ENCODE measurements at regions of chr20 and their contacts with region 1.

Region 1: GRCh38 chr20:5529331-5530148 is 212.8 kb upstream of the PROKR2 start:
- DNase-seq: peak; percentile 56
- ATAC-seq: peak; percentile 86
- H3K4me3 ChIP-seq: no peak overlapping the region
- H3K27ac ChIP-seq: no peak overlapping the region
- H3K4me1 ChIP-seq: peaks cover 2% of the 10 kb centered on the region
- H3K27me3 ChIP-seq: no peaks in the 10 kb centered on the region
- CTCF ChIP-seq: peak; percentile 82
- POLR2A ChIP-seq: no peak
- RAD21 ChIP-seq: peak; percentile 83

Region 2: GRCh38 chr20:5950271-5951031 is 420.9 kb after region 1 on chr20 and contains the starts of genes MCM8 and TRMT6:
- CTCF ChIA-PET with region 1: interaction called, 3 read pairs
- POLR2A ChIA-PET with region 1: no interaction called
- dilution Hi-C with region 1: no loop called
- in situ Hi-C with region 1: loop called (anchors 25 kb)
- intact Hi-C with region 1: loop called (anchors 1 kb)
- DNase-seq: peak; percentile 94
- ATAC-seq: peak; percentile 99
- H3K4me3 ChIP-seq: peak within 1 kb of the TSS; percentile 65
- H3K27ac ChIP-seq: peak within 1 kb of the TSS; percentile 61
- H3K4me1 ChIP-seq: no peaks in the 10 kb centered on the region
- H3K27me3 ChIP-seq: no peaks in the 10 kb centered on the region
- CTCF ChIP-seq: no peak
- POLR2A ChIP-seq: peak; percentile 59; the same call in 1 of the 2 replicates
- RAD21 ChIP-seq: no peak
- total RNA-seq, gene MCM8: 11.5 and 13.9 TPM in 2 replicates
- total RNA-seq, gene TRMT6: 7.2 and 10.0 TPM in 2 replicates

Region 3: DNA sequence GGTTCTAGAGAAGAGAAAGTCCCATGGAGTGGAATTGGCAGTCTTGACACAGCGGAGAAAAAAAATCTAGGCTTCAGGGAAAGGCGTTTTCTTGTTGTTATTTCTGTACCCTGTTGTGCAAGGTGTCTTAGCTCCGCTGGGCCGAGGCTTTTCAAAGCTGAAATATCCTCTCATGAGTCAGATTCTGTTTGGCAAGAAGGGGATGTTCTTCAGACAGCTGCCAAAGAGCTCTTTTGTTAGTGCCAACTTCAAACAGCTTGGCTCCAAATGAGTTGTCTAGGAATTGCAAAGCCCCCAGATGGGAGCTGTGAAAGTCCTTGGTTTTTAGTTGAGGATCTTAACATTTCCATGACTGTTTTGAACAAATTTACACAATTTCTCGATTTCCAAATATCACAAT is 478.7 kb after region 1 on chr20:
- CTCF ChIA-PET with region 1: no interaction called
- POLR2A ChIA-PET with region 1: interaction called, 3 read pairs
- dilution Hi-C with region 1: no loop called
- in situ Hi-C with region 1: no loop called
- intact Hi-C with region 1: loop called (anchors 1 kb)
- DNase-seq: peak; percentile 92
- ATAC-seq: no peak; the same call in 1 of the 2 replicates
- H3K4me3 ChIP-seq: no peak overlapping the region; the same call in 1 of the 2 replicates
- H3K27ac ChIP-seq: no peak overlapping the region
- H3K4me1 ChIP-seq: peaks cover 3% of the 10 kb centered on the region
- H3K27me3 ChIP-seq: no peaks in the 10 kb centered on the region
- CTCF ChIP-seq: no peak
- POLR2A ChIP-seq: no peak
- RAD21 ChIP-seq: no peak

Region 4: GRCh38 chr20:6074145-6074561 is 544.6 kb after region 1 on chr20:
- CTCF ChIA-PET with region 1: interaction called, 4 read pairs
- POLR2A ChIA-PET with region 1: no interaction called
- dilution Hi-C with region 1: no loop called
- in situ Hi-C with region 1: no loop called
- intact Hi-C with region 1: loop called (anchors 1 kb)
- DNase-seq: no peak
- ATAC-seq: peak; percentile 70
- H3K4me3 ChIP-seq: no peak overlapping the region
- H3K27ac ChIP-seq: no peak overlapping the region
- H3K4me1 ChIP-seq: no peaks in the 10 kb centered on the region
- H3K27me3 ChIP-seq: no peaks in the 10 kb centered on the region
- CTCF ChIP-seq: peak; percentile 15; the same call in 1 of the 2 replicates
- POLR2A ChIP-seq: no peak
- RAD21 ChIP-seq: no peak

Region 5: DNA sequence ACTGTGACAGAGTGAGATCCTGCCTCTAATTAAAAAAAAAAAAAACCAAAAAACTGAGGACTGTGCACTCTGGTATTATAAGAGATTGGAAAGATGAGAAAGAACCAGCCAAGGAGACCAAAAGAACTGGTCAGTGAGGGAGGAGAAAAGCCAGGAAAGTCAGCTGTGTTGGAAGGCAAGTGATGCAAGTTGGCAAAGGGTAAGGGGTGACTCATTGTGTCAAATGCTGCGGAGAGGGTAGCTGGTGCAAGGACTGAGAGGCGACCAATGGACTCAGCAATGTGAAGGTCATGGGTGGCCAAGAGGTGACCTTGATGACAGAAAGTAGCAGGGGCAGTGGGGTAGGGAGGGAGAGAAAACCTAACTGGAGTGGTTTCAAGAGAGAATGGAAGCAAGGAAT is 551.7 kb after region 1 on chr20:
- CTCF ChIA-PET with region 1: interaction called, 4 read pairs
- POLR2A ChIA-PET with region 1: no interaction called
- dilution Hi-C with region 1: no loop called
- in situ Hi-C with region 1: loop called (anchors 5 kb)
- intact Hi-C with region 1: loop called (anchors 1 kb)
- DNase-seq: peak; percentile 52
- ATAC-seq: peak; percentile 34; the same call in 1 of the 2 replicates
- H3K4me3 ChIP-seq: no peak overlapping the region
- H3K27ac ChIP-seq: no peak overlapping the region
- H3K4me1 ChIP-seq: no peaks in the 10 kb centered on the region
- H3K27me3 ChIP-seq: no peaks in the 10 kb centered on the region
- CTCF ChIP-seq: no peak
- POLR2A ChIP-seq: no peak
- RAD21 ChIP-seq: no peak

Measured in IMR-90 (cell line).